Posterior vena cava (tissue), 2 donors: ENCODE measurements at regions of chrX and their contacts with region 1.

Region 1: DNA sequence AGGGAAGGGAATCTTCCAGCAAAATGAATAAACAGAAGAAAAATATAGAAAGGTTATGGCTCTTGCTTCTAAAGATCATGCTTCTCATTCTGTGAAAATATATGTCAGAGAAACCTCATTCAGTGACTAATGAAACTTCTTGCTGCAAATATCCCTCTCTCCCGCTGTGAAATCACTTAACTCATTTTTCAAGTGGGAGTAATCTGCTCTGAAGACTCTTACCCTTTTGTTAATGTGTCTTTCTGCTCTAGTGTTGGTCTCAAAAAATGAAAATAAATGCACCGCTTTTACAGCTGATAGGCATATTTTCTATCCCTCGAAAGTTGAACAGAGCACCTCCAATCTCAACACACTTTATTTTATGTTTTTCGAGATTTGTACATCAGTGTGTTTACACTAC is 252.3 kb downstream of the NLGN4X start:
- DNase-seq: no peak

Region 2: GRCh38 chrX:6002056-6002455 is 25.7 kb after region 1 on chrX:
- intact Hi-C with region 1: loop called in 1 of 2 experiments (anchors 2 kb)
- DNase-seq: no peak